MCF 10A (cell line): ENCODE measurements at regions of chr7 and their contacts with region 1.

Region 1: DNA sequence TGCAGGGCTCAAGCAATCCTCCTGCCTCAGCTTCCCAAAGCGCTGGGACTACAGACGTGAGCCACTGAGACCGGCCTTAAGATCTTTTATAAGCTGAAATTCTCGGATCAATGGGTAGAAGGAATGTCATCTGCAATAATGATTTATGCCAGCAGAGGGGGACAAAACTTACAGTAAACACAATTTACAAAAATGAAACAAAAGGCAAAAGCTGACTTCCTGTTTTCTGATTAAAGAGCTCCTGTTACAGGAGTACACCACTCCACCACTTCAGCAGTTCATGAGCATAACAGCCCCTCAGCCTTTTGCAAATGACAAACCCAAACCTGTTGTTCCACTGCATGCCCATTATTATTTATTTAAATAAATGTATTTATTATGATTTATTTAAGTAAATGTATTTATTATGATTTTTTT is 88.5 kb upstream of the ATP6V0A4 start:
- DNase-seq: peak; percentile 72
- H3K4me3 Mint-ChIP-seq: no peak overlapping the region
- H3K27ac Mint-ChIP-seq: no peak overlapping the region
- H3K4me1 Mint-ChIP-seq: peaks cover 13% of the 10 kb centered on the region
- H3K27me3 Mint-ChIP-seq: no peaks in the 10 kb centered on the region
- CTCF ChIP-seq: peak; percentile 59

Region 2: DNA sequence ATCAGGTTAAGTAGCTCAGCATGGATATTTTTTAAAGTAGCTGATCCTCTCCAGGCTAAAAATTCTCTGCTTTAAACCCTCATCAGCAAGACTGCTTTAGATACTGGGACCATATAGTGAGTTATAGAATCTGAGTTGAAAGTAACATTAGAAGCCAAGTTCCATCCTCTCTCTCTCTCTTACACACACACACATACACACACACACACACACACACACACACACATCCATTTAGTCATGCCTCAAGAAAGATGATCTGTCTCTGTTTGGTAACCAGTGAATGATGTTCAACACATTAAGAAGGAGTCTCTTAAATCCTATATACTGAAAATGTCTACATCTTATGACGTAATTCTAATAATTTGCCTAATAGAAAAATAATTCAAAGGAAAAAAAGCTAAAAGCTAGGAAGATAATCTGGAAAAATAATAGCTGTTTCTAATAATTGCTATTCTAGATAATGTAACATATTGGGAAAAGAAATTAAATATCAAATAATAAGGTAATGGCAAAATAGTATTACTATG is 71.6 kb before region 1 on chr7:
- CTCF ChIA-PET with region 1: no interaction called
- POLR2A ChIA-PET with region 1: no interaction called
- intact Hi-C with region 1: no loop called
- DNase-seq: no peak
- H3K4me3 Mint-ChIP-seq: no peak overlapping the region
- H3K27ac Mint-ChIP-seq: no peak overlapping the region
- H3K4me1 Mint-ChIP-seq: no peaks in the 10 kb centered on the region
- H3K27me3 Mint-ChIP-seq: no peaks in the 10 kb centered on the region
- CTCF ChIP-seq: no peak

Region 3: GRCh38 chr7:138898255-138898654 is 11.7 kb after region 1 on chr7:
- CTCF ChIA-PET with region 1: interaction called, 22 read pairs
- POLR2A ChIA-PET with region 1: interaction called, 3 read pairs
- intact Hi-C with region 1: no loop called
- DNase-seq: no peak
- H3K4me3 Mint-ChIP-seq: no peak overlapping the region
- H3K27ac Mint-ChIP-seq: peak overlapping the region; percentile 16
- H3K4me1 Mint-ChIP-seq: peaks cover 18% of the 10 kb centered on the region
- H3K27me3 Mint-ChIP-seq: no peaks in the 10 kb centered on the region
- CTCF ChIP-seq: no peak

Region 4: DNA sequence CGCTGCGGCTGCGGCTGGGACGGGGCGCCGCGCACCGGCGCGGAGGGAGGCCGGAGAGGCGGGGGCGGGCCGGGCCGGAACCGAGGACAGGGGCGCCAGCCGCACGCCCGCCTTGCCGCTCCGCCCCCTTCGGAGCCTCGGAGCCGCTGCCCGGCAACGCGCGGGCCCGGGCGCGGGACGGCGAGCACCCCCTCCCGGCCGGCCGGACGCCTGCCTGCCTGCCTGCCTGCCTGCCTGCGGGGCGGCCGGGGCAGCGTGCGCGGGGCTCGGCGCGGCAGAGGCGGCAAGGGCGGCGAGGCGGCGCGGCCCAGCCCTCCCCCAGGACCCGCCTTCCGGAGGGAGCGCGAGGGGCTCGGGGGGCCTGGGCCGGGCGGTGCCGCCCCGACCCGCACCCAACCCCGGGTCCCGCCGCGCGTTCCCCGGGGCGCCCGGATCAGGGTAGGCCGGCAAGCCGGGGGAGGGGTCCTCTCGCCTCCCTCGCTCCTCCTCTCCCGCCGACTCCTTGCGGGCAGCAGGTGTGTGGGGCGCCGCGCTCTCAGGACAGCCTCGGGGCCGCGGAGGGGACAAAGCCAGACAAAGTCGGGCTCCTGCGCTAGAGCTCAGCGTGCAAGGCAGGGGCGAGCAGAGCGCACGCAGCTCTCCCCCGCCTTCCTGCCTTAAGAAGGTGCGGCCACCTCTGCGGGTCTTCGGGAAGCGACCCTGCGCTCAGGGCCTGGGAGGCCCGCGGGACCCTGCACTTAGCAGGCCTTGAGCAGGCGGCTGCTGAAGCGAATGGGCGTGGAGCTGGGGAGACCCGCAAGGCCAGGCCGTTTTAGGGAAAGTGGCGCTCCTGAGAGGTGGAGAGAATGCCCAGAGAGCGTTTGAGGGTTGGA is 95.1 kb after region 1 on chr7 and contains the start of gene KIAA1549:
- CTCF ChIA-PET with region 1: interaction called, 17 read pairs
- POLR2A ChIA-PET with region 1: interaction called, 6 read pairs
- intact Hi-C with region 1: loop called (anchors 1 kb)
- DNase-seq: peak; percentile 65
- H3K4me3 Mint-ChIP-seq: peak within 1 kb of the TSS; percentile 86
- H3K27ac Mint-ChIP-seq: no peak within 1 kb of the TSS
- H3K4me1 Mint-ChIP-seq: peaks cover 29% of the 10 kb centered on the region
- H3K27me3 Mint-ChIP-seq: no peaks in the 10 kb centered on the region
- CTCF ChIP-seq: peak; percentile 31
- total RNA-seq, gene KIAA1549: 7.1 and 8.4 TPM in 2 replicates

Region 5: GRCh38 chr7:139016931-139017511 is 130.5 kb after region 1 on chr7:
- CTCF ChIA-PET with region 1: interaction called, 11 read pairs
- POLR2A ChIA-PET with region 1: interaction called, 4 read pairs
- intact Hi-C with region 1: loop called (anchors 1 kb)
- DNase-seq: peak; percentile 77
- H3K4me3 Mint-ChIP-seq: no peak overlapping the region
- H3K27ac Mint-ChIP-seq: no peak overlapping the region
- H3K4me1 Mint-ChIP-seq: peaks cover 5% of the 10 kb centered on the region
- H3K27me3 Mint-ChIP-seq: peaks cover 26% of the 10 kb centered on the region
- CTCF ChIP-seq: peak; percentile 62